WTC11 (cell line): ENCODE measurements at regions of chr22 and their contacts with region 1.

Region 1: GRCh38 chr22:37260901-37261336 is 16.9 kb upstream of the RAC2 start:
- DNase-seq: peak; percentile 74
- ATAC-seq: peak; percentile 69
- H3K4me3 Mint-ChIP-seq: no peak overlapping the region
- H3K27ac Mint-ChIP-seq: no peak overlapping the region
- H3K4me1 Mint-ChIP-seq: peaks cover 19% of the 10 kb centered on the region
- H3K27me3 Mint-ChIP-seq: peaks cover 34% of the 10 kb centered on the region
- CTCF ChIP-seq: peak; percentile 86

Region 2: DNA sequence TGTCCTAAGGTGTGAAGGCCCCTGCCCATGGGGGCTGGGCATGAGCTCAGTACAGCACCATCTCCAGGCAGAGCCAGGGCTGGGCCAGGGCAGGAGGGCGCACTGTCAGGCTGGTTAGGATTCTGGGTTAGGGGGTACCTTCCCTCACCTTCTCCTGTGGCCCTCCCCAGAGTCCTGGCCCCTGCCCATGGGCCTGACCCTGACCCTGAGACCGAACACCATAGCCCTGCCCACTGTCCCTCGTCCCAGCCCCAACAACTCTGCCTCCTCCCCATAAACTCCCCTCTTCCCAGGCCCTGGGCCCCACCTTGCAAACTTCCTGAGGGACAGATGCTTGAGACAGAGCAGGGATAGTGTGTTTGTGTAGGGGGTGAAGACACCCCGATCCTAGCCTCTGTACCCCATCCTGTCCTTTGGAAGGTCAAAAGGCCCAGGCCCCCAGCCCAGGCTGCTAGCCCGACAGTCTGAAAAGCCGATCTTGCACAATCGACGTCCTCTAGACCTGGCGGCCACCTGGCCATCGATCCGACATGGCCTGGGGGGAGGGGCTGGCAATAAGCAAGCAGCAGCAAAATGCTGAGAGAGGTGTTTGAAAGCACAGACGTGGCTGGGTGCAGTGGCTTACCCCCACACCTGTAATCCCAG is 148.7 kb before region 1 on chr22:
- CTCF ChIA-PET with region 1: no interaction called
- POLR2A ChIA-PET with region 1: no interaction called
- DNase-seq: no peak
- ATAC-seq: no peak
- H3K4me3 Mint-ChIP-seq: no peak overlapping the region
- H3K27ac Mint-ChIP-seq: no peak overlapping the region
- H3K4me1 Mint-ChIP-seq: peaks cover 10% of the 10 kb centered on the region
- H3K27me3 Mint-ChIP-seq: no peaks in the 10 kb centered on the region; the same call in 1 of the 2 replicates
- CTCF ChIP-seq: no peak

Region 3: GRCh38 chr22:37166675-37167066 is 94.2 kb before region 1 on chr22:
- CTCF ChIA-PET with region 1: interaction called, 12 read pairs
- POLR2A ChIA-PET with region 1: no interaction called
- DNase-seq: peak; percentile 84
- ATAC-seq: peak; percentile 88
- H3K4me3 Mint-ChIP-seq: no peak overlapping the region; the same call in 1 of the 2 replicates
- H3K27ac Mint-ChIP-seq: no peak overlapping the region
- H3K4me1 Mint-ChIP-seq: peaks cover 16% of the 10 kb centered on the region
- H3K27me3 Mint-ChIP-seq: peaks cover 7% of the 10 kb centered on the region
- CTCF ChIP-seq: no peak; the same call in 1 of the 2 replicates

Region 4: GRCh38 chr22:37204731-37205445 is 56.0 kb before region 1 on chr22:
- CTCF ChIA-PET with region 1: interaction called, 68 read pairs
- POLR2A ChIA-PET with region 1: no interaction called
- DNase-seq: no peak
- ATAC-seq: no peak
- H3K4me3 Mint-ChIP-seq: no peak overlapping the region
- H3K27ac Mint-ChIP-seq: no peak overlapping the region
- H3K4me1 Mint-ChIP-seq: peaks cover 3% of the 10 kb centered on the region; the same call in 1 of the 2 replicates
- H3K27me3 Mint-ChIP-seq: no peaks in the 10 kb centered on the region
- CTCF ChIP-seq: no peak

Region 5: DNA sequence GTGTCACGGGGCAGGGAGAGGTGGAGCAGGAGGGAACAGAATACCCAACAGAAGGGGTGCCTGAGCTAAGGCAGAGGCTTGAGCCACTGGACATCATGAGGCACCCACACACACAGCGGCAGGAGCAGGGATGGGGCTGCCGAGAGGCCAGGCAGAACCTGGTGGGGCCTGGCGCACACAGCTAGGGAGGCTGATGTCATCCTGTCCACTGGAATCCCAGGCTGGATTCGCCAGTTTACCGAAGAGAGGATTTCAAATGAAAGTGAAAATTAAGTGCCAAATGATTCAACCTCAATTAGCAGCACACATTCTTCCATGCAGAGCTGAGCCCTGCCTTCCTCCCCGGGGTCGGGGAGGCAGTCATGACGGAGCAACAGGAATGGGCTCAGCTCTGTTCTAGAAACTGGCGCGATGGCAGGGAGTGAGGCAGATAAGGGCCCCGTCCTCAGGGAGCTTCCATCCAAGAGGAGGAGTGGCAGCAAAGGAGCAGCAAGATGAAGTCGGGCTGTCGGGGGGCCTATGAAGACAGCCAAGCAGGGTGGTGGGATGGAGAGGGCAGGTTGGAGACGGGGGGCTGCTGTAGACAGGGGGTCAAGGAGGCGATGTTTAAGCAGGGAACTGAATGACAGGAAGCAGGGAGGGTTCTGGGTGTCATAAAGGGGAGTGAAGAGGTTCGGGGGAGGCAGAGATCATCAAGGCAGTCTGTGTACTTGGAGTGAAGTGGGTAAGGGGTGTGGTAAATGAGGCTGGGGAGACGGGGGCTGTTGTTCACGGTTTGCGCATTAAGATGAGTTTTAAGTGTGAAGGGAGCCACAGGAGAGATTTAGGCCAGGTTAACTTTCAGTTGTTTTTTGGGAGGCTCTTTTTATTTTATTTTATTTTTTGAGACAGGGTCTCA is 23.3 kb before region 1 on chr22:
- CTCF ChIA-PET with region 1: interaction called, 83 read pairs
- POLR2A ChIA-PET with region 1: no interaction called
- DNase-seq: no peak
- ATAC-seq: no peak
- H3K4me3 Mint-ChIP-seq: no peak overlapping the region
- H3K27ac Mint-ChIP-seq: no peak overlapping the region
- H3K4me1 Mint-ChIP-seq: peaks cover 16% of the 10 kb centered on the region
- H3K27me3 Mint-ChIP-seq: peaks cover 2% of the 10 kb centered on the region
- CTCF ChIP-seq: no peak

Region 6: DNA sequence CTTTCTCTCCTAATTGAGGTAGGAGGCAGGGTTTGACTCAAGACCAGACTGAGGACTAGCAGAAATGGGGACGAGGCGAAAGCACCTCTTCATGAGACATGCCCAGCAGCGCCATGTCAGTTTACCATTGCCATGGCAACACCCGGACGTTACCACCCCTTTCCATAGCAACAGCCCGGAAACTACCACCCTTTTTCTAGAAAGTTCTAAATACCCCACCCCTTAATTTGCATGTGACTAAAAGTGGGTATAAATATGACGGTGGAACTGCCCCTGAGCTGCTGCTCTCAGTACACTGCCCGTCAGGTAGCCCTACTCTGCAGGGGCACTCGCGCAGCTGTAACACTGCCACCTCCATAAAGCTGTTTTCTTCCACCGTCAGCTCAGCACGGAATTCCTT is 10.9 kb before region 1 on chr22:
- CTCF ChIA-PET with region 1: interaction called, 83 read pairs
- POLR2A ChIA-PET with region 1: no interaction called
- DNase-seq: no peak
- ATAC-seq: peak; percentile 24; the same call in 1 of the 2 replicates
- H3K4me3 Mint-ChIP-seq: no peak overlapping the region
- H3K27ac Mint-ChIP-seq: no peak overlapping the region; the same call in 1 of the 2 replicates
- H3K4me1 Mint-ChIP-seq: peaks cover 14% of the 10 kb centered on the region
- H3K27me3 Mint-ChIP-seq: no peaks in the 10 kb centered on the region; the same call in 1 of the 2 replicates
- CTCF ChIP-seq: no peak

Region 7: DNA sequence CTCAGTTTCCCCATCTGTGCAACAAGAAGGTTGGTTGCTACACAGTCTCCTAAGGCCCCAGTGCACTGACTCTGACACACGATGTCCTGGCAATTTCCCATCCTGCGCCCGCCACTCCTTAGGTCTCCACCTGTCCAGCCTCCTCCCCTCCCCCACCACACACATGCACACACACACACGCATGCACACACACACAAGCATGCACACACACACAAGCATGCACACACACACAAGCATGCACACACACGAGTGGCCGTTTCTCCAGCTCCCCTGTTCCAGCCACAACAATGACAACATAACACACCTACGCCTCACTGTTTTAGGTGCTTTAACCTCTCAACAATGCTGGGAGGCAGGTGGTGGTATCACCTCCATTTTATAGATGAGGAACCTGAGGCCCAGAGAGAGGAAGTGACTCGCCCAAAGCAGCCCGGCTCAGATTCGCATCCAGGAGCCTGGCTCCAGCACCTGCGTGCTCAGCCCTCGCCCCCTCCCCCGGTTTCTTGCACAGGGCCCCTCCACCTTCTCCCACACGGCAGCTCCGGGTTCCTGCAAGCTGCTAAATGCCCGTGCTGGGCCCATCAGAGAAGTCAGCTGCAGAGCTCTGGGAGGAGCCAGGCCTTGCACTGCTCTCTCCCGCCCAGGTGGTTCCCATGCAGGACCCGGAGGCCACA is 34.4 kb after region 1 on chr22:
- CTCF ChIA-PET with region 1: interaction called, 12 read pairs
- POLR2A ChIA-PET with region 1: no interaction called
- DNase-seq: no peak
- ATAC-seq: peak; percentile 38; the same call in 1 of the 2 replicates
- H3K4me3 Mint-ChIP-seq: no peak overlapping the region
- H3K27ac Mint-ChIP-seq: no peak overlapping the region
- H3K4me1 Mint-ChIP-seq: peaks cover 5% of the 10 kb centered on the region
- H3K27me3 Mint-ChIP-seq: no peaks in the 10 kb centered on the region
- CTCF ChIP-seq: no peak

Region 8: GRCh38 chr22:37362621-37363020 is 101.7 kb after region 1 on chr22:
- CTCF ChIA-PET with region 1: no interaction called
- POLR2A ChIA-PET with region 1: no interaction called
- DNase-seq: no peak
- ATAC-seq: no peak
- H3K4me3 Mint-ChIP-seq: no peak overlapping the region
- H3K27ac Mint-ChIP-seq: no peak overlapping the region
- H3K4me1 Mint-ChIP-seq: 0 out of 2 replicates have a peak, but pooled peaks cover under 1% of the 10 kb centered on the region
- H3K27me3 Mint-ChIP-seq: peaks cover 4% of the 10 kb centered on the region; the same call in 1 of the 2 replicates
- CTCF ChIP-seq: no peak

Region 9: DNA sequence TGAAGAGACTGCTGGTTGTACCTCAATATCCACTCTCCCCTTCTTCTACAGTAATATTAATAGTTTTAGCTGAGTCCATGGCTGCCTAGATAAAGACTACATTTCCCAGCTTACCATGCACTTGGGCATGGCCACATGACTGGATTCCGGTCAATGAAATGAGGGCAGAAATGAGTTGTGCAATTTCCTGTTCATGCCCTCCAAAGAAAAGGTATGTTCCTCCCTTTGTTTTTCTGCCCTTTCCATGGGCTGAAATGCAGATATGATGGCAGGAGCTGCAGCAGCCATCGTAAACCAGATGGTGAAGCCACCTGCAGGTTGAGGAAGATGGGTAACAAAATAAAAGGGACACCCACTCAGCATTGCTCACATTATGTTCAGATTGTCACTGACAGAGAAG is 181.6 kb after region 1 on chr22:
- CTCF ChIA-PET with region 1: no interaction called
- POLR2A ChIA-PET with region 1: no interaction called
- DNase-seq: no peak
- ATAC-seq: 0 out of 2 replicates have a peak, but pooled peaks have one; percentile 32
- H3K4me3 Mint-ChIP-seq: no peak overlapping the region
- H3K27ac Mint-ChIP-seq: no peak overlapping the region
- H3K4me1 Mint-ChIP-seq: no peaks in the 10 kb centered on the region
- H3K27me3 Mint-ChIP-seq: peaks cover 11% of the 10 kb centered on the region
- CTCF ChIP-seq: no peak

Region 10: DNA sequence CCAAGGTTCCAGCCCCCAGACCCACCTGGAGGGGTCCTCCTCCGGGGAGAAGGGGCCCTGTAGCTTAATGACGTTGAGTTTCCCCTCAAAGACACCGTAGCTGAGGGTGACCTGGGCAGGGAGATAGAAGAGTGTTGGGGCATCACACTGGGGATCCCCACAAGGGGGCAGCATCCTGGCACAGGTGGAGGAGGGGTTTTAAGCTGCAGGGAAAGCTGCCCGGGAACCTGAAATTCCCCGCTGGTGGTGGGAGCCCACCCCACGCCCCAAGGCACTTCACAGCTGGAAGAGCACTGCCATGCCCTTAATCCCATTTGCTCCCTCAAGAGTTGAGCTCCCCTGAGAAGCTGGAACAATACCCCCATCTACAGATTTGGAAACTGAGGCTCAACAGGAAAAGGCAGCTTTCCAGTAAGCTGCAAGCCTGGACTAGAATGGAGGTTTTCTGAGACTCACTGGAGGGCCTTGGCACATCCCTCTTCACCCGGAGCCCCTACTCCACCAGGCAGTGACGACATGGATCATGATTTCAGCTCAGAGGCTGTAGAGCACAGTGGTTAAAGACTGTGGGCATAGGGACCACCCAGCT is 211.6 kb after region 1 on chr22:
- CTCF ChIA-PET with region 1: interaction called, 18 read pairs
- POLR2A ChIA-PET with region 1: no interaction called
- DNase-seq: peak; percentile 79
- ATAC-seq: peak; percentile 81
- H3K4me3 Mint-ChIP-seq: no peak overlapping the region
- H3K27ac Mint-ChIP-seq: no peak overlapping the region
- H3K4me1 Mint-ChIP-seq: 0 out of 2 replicates have a peak, but pooled peaks cover 3% of the 10 kb centered on the region
- H3K27me3 Mint-ChIP-seq: no peaks in the 10 kb centered on the region; the same call in 1 of the 2 replicates
- CTCF ChIP-seq: peak; percentile 66

Region 11: GRCh38 chr22:37676736-37677492 is 416.0 kb after region 1 on chr22:
- CTCF ChIA-PET with region 1: no interaction called
- POLR2A ChIA-PET with region 1: no interaction called
- DNase-seq: peak; percentile 86
- ATAC-seq: peak; percentile 74
- H3K4me3 Mint-ChIP-seq: peak overlapping the region; percentile 72
- H3K27ac Mint-ChIP-seq: peak overlapping the region; percentile 84
- H3K4me1 Mint-ChIP-seq: peaks cover 13% of the 10 kb centered on the region
- H3K27me3 Mint-ChIP-seq: peaks cover 18% of the 10 kb centered on the region
- CTCF ChIP-seq: no peak